ENCODE measurements at regions of chr7 and their contacts with region 1.

Region 1: DNA sequence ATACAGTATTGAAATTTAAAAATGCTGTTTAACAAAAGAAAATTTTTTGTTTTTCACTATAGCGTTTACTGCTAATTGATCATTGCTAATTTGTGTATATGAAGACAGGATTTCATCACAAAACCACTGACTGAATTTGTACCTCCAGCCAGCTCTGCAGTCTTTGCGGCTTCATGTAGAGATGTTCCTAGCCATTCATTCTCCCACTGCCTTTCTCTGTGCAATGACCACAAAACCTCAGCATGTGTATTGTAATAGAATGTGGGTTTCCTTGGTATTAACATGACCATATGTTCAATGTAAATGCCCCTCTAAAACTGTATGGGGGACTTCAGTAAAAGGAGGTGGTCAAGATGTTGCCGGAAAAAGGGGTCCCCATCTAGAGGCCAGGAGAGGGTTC is 81.1 kb upstream of the STEAP1B start:
- DNase-seq: peak; percentile 33
- ATAC-seq: no peak
- H3K4me3 Mint-ChIP-seq: no peak overlapping the region
- H3K27ac Mint-ChIP-seq: no peak overlapping the region
- H3K4me1 Mint-ChIP-seq: peaks cover 44% of the 10 kb centered on the region
- H3K27me3 Mint-ChIP-seq: peaks cover 54% of the 10 kb centered on the region

Region 2: DNA sequence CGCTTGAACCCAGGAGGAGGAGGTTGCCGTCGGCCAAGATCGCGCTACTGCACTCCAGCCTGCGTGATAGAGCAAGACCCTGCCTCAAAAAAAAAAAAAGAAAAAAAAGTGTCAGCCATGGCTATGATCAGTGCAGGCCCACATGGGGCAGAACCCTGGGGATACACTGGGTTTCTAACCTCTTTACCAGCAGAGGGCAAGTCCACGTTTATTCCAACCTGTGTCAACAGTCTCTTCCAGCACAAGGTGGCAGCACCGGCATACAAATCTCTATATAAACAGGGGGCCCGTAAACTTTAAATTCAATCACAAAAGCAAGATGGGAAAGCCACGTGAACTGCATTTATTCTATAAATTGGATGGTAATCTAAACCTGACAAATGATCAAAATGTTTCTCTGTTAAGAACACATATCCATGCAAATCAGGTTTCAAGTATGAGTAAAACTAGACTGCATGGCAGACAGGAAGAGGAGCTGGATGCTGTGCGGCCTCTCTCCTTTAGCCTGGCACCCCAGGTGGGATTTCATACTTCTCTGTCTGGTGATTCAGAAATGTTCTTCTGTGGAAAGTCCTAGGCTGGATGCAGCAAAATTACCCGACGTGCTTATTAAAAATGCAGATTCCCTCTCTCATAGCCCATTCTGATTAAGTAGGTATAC is 21.1 kb before region 1 on chr7:
- CTCF ChIA-PET with region 1: interaction called, 13 read pairs
- POLR2A ChIA-PET with region 1: no interaction called
- DNase-seq: peak; percentile 86
- ATAC-seq: peak; percentile 79
- H3K4me3 Mint-ChIP-seq: no peak overlapping the region
- H3K27ac Mint-ChIP-seq: no peak overlapping the region
- H3K4me1 Mint-ChIP-seq: peaks cover 51% of the 10 kb centered on the region
- H3K27me3 Mint-ChIP-seq: peaks cover 14% of the 10 kb centered on the region

Measured in activated CD8-positive, alpha-beta T cell treated with anti-CD3 and anti-CD28 coated beads, Interleukin-2, amount 10 ng/mL, durations not matched to agents 7 days and 5 days (primary cell).